Natural killer cell (primary cell): ENCODE measurements at regions of chr16 and their contacts with region 1.

Region 1: GRCh38 chr16:25031441-25032307 is 16.5 kb upstream of the ARHGAP17 start:
- DNase-seq: peak; percentile 84 to 97
- ATAC-seq: peak; percentile 100
- H3K4me3 ChIP-seq: peak overlapping the region; percentile 51
- H3K4me3 Mint-ChIP-seq: peak overlapping the region; percentile 91
- H3K27ac ChIP-seq: peak overlapping the region; percentile 55
- H3K27ac Mint-ChIP-seq: peak overlapping the region; percentile 17 to 91
- H3K4me1 ChIP-seq: peaks cover 12% of the 10 kb centered on the region
- H3K4me1 Mint-ChIP-seq: peaks cover 13 to 35% of the 10 kb centered on the region in 2 donors
- H3K27me3 ChIP-seq: no peaks in the 10 kb centered on the region
- H3K27me3 Mint-ChIP-seq: no peaks in the 10 kb centered on the region
- CTCF ChIP-seq: no peak

Region 2: GRCh38 chr16:25014500-25015147 is 17.1 kb before region 1 on chr16:
- intact Hi-C with region 1: loop called (anchors 1 kb)
- DNase-seq: peak; percentile 26 to 54
- ATAC-seq: peak; percentile 37 to 57 (median 42)
- H3K4me3 ChIP-seq: peak overlapping the region; percentile 77
- H3K4me3 Mint-ChIP-seq: peak overlapping the region; percentile 92
- H3K27ac ChIP-seq: peak overlapping the region; percentile 85
- H3K27ac Mint-ChIP-seq: peak overlapping the region; percentile 88 to 93
- H3K4me1 ChIP-seq: peaks cover 60% of the 10 kb centered on the region
- H3K4me1 Mint-ChIP-seq: peaks cover 60 to 65% of the 10 kb centered on the region in 2 donors
- H3K27me3 ChIP-seq: no peaks in the 10 kb centered on the region
- H3K27me3 Mint-ChIP-seq: no peaks in the 10 kb centered on the region
- CTCF ChIP-seq: no peak

Region 3: DNA sequence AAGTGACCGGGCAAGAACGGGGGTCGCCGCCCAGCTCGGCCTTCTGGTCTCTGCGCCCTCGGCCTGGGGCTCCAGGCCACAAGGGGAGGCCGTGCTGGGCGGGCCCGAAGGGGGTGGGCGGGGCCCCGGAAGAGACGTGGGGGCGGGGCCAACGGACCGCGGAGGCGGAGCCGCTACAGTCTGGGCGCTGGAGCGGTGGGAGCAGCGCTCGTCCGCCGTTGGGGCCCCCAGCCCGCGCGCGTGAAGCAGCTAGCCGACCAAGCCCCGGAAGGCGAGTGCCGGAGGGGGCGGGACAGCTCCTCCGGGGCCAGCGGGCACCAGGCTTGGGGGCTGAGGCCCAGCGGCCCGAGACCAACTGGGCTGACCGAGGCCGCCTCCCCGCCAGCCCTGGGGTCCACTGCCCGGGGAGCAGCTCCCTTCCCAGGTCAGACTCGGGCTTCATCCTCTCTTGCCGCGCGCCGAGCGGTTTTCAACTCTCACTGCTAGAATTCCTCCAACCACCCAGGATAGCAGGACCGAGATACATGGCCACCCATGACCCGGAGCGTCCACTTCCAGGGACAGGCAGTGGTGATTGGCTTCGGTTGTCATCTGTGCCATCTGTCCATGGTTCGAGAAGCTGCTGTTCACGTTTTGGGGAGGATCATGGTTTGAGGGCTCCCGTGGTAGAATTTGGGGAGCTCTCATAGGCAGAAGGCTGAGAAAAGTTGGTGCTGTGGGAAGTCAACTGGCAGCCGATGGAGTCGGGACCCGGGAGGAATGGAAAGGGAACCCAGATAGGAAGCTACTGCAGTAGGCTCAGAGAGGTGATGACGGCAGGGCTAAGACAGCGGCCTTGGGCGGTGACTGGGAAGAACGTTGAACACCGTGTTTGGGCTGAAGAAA is 35.3 kb after region 1 on chr16:
- intact Hi-C with region 1: loop called (anchors 2 kb)
- DNase-seq: peak; percentile 78 to 92
- ATAC-seq: peak; percentile 98 to 99 (median 98)
- H3K4me3 ChIP-seq: peak overlapping the region; percentile 90
- H3K4me3 Mint-ChIP-seq: peak overlapping the region; percentile 91
- H3K27ac ChIP-seq: peak overlapping the region; percentile 90
- H3K27ac Mint-ChIP-seq: peak overlapping the region; percentile 75 to 87
- H3K4me1 ChIP-seq: peaks cover 40% of the 10 kb centered on the region
- H3K4me1 Mint-ChIP-seq: peaks cover 28 to 40% of the 10 kb centered on the region in 2 donors
- H3K27me3 ChIP-seq: no peaks in the 10 kb centered on the region
- H3K27me3 Mint-ChIP-seq: no peaks in the 10 kb centered on the region
- CTCF ChIP-seq: no peak

Region 4: DNA sequence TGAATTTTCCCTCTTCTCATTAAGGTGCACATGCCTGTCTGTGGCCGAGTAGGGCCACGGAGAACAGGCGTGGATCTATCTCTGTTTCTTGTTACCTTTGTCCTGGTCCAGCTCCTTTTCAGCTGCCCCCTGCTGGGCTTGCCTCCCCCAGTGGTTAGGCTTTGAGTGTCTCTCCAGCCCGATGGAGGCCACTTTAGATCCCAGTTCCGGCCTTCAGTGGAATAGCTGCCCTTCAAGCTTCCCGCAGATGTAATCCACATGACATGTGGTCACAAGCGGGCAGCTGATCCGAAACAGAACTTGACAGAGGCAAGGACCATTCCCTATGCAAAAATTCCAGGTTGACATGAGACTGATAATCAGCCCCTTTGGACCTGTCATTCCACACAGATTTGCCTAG is 144.4 kb after region 1 on chr16:
- intact Hi-C with region 1: no loop called
- DNase-seq: peak in 1 of 2 donors; percentile 19
- ATAC-seq: no peak
- H3K4me3 ChIP-seq: no peak overlapping the region
- H3K4me3 Mint-ChIP-seq: no peak overlapping the region
- H3K27ac ChIP-seq: no peak overlapping the region
- H3K27ac Mint-ChIP-seq: no peak overlapping the region
- H3K4me1 ChIP-seq: peaks cover 9% of the 10 kb centered on the region
- H3K4me1 Mint-ChIP-seq: peaks cover 8 to 9% of the 10 kb centered on the region in 2 donors
- H3K27me3 ChIP-seq: no peaks in the 10 kb centered on the region
- H3K27me3 Mint-ChIP-seq: no peaks in the 10 kb centered on the region
- CTCF ChIP-seq: no peak